ENCODE measurements at regions of chr3 and their contacts with region 1.

Region 1: GRCh38 chr3:49469936-49470713 is at the start of gene DAG1:
- DNase-seq: peak; percentile 98 to 99 (median 98)
- ATAC-seq: peak; percentile 84 to 91 (median 87)
- H3K4me3 ChIP-seq: peak within 1 kb of the TSS; percentile 75 to 96 (median 83)
- H3K27ac ChIP-seq: peak within 1 kb of the TSS; percentile 83 to 97 (median 97)
- H3K4me1 ChIP-seq: peaks cover 20 to 45% (median 39%) of the 10 kb centered on the region in 3 donors
- H3K27me3 ChIP-seq: no peaks in the 10 kb centered on the region
- CTCF ChIP-seq: no peak
- total RNA-seq, gene DAG1: 60.8 to 108 (median 71.6) TPM

Region 2: GRCh38 chr3:49295489-49296058 is 174.6 kb before region 1 on chr3:
- intact Hi-C with region 1: no loop called
- DNase-seq: no peak
- ATAC-seq: peak; percentile 38 to 76 (median 68)
- H3K4me3 ChIP-seq: no peak overlapping the region
- H3K27ac ChIP-seq: no peak overlapping the region
- H3K4me1 ChIP-seq: peaks cover 0 to 1% (median 0%) of the 10 kb centered on the region in 3 donors
- H3K27me3 ChIP-seq: no peaks in the 10 kb centered on the region
- CTCF ChIP-seq: peak; percentile 12 to 42 (median 26)

Region 3: GRCh38 chr3:49512771-49513358 is 42.7 kb after region 1 on chr3:
- intact Hi-C with region 1: loop called in 1 of 3 experiments (anchors 5 kb)
- DNase-seq: no peak
- ATAC-seq: peak; percentile 59 to 85 (median 72)
- H3K4me3 ChIP-seq: no peak overlapping the region
- H3K27ac ChIP-seq: peak overlapping the region in 2 of 4 donors; percentile 39 to 42
- H3K4me1 ChIP-seq: peaks cover 17 to 19% (median 18%) of the 10 kb centered on the region in 3 donors
- H3K27me3 ChIP-seq: no peaks in the 10 kb centered on the region
- CTCF ChIP-seq: no peak

Region 4: DNA sequence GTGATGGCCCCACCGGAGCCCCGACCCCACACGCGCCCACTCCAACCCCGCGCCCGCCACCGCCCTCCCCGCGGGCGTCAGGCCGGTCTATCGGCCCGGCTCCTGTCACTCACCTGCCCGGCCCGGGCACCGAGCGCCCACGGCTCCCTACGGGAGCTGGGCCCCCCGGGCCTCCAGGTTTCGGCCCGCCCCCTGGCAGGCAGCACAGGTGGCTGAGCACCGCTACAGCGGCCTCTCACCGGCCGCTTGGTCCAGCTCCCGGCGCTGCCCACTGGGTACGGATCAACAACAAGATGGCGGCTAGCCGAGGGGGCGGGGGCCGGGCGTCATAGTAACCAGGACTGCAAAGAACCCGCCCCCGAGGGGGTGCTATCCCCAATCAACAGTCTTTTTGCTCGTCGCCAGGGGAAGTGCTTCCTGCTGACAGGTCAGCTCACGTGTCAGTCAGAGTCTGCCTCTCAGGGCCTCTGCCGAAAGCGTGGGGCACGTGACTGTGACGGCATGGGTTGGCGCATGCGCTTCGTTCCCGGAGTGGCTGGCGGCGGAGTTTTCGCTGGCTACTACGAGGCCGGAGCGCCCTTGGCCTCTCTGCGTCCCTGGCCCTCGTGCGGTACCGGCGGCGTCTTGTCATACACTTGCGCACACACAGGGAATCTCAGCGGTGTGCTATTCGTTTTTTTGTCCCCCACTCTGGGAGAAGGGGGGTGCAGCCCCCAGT is 316.3 kb after region 1 on chr3 and contains the start of gene IP6K1:
- intact Hi-C with region 1: no loop called
- DNase-seq: peak; percentile 99 to 100 (median 100)
- ATAC-seq: peak; percentile 97 to 100 (median 99)
- H3K4me3 ChIP-seq: peak within 1 kb of the TSS; percentile 69 to 99 (median 94)
- H3K27ac ChIP-seq: peak within 1 kb of the TSS; percentile 92 to 97 (median 95)
- H3K4me1 ChIP-seq: peaks cover 0 to 11% (median 7%) of the 10 kb centered on the region in 3 donors
- H3K27me3 ChIP-seq: no peaks in the 10 kb centered on the region
- CTCF ChIP-seq: no peak
- total RNA-seq, gene IP6K1: 12.0 to 28.5 (median 17.1) TPM

Measured in pancreas (tissue), 10 donors.